ENCODE measurements at regions of chr6 and their contacts with region 1.

Region 1: GRCh38 chr6:43629505-43630300 is 639 bp upstream of the GTPBP2 start:
- DNase-seq: peak; percentile 65 to 96 (median 82)
- ATAC-seq: peak; percentile 58
- H3K4me3 ChIP-seq: peak overlapping the region; percentile 92
- H3K4me3 Mint-ChIP-seq: peak overlapping the region; percentile 98
- H3K27ac ChIP-seq: peak overlapping the region; percentile 86 to 90
- H3K27ac Mint-ChIP-seq: peak overlapping the region; percentile 94
- H3K4me1 ChIP-seq: peaks cover 40% of the 10 kb centered on the region
- H3K4me1 Mint-ChIP-seq: peaks cover 41% of the 10 kb centered on the region
- H3K27me3 ChIP-seq: no peaks in the 10 kb centered on the region
- H3K27me3 Mint-ChIP-seq: no peaks in the 10 kb centered on the region
- CTCF ChIP-seq: no peak

Region 2: GRCh38 chr6:43247113-43247999 is 382.3 kb before region 1 on chr6:
- CTCF ChIA-PET with region 1: no interaction called
- POLR2A ChIA-PET with region 1: no interaction called
- intact Hi-C with region 1: loop called in 1 of 2 experiments (anchors 5 kb)
- DNase-seq: peak; percentile 65 to 89 (median 76)
- ATAC-seq: peak; percentile 97
- H3K4me3 ChIP-seq: peak overlapping the region; percentile 58
- H3K4me3 Mint-ChIP-seq: no peak overlapping the region
- H3K27ac ChIP-seq: peak overlapping the region; percentile 24 to 42
- H3K27ac Mint-ChIP-seq: peak overlapping the region; percentile 70
- H3K4me1 ChIP-seq: peaks cover 26% of the 10 kb centered on the region
- H3K4me1 Mint-ChIP-seq: peaks cover 22% of the 10 kb centered on the region
- H3K27me3 ChIP-seq: peaks cover 34 to 35% of the 10 kb centered on the region in 2 experiments
- H3K27me3 Mint-ChIP-seq: peaks cover 15% of the 10 kb centered on the region
- CTCF ChIP-seq: no peak

Region 3: GRCh38 chr6:43427406-43428111 is 202.1 kb before region 1 on chr6 and contains the start of gene ABCC10:
- CTCF ChIA-PET with region 1: no interaction called
- POLR2A ChIA-PET with region 1: interaction called, 10 read pairs
- intact Hi-C with region 1: loop called in 1 of 2 experiments (anchors 5 kb)
- DNase-seq: peak; percentile 89 to 98 (median 94)
- ATAC-seq: peak; percentile 90
- H3K4me3 ChIP-seq: peak within 1 kb of the TSS; percentile 80
- H3K4me3 Mint-ChIP-seq: peak within 1 kb of the TSS; percentile 95
- H3K27ac ChIP-seq: peak within 1 kb of the TSS; percentile 73 to 76
- H3K27ac Mint-ChIP-seq: peak within 1 kb of the TSS; percentile 93
- H3K4me1 ChIP-seq: peaks cover 29% of the 10 kb centered on the region
- H3K4me1 Mint-ChIP-seq: peaks cover 26% of the 10 kb centered on the region
- H3K27me3 ChIP-seq: no peaks in the 10 kb centered on the region
- H3K27me3 Mint-ChIP-seq: no peaks in the 10 kb centered on the region
- CTCF ChIP-seq: peak; percentile 46
- total RNA-seq, gene ABCC10: 35.7 to 38.5 TPM

Region 4: DNA sequence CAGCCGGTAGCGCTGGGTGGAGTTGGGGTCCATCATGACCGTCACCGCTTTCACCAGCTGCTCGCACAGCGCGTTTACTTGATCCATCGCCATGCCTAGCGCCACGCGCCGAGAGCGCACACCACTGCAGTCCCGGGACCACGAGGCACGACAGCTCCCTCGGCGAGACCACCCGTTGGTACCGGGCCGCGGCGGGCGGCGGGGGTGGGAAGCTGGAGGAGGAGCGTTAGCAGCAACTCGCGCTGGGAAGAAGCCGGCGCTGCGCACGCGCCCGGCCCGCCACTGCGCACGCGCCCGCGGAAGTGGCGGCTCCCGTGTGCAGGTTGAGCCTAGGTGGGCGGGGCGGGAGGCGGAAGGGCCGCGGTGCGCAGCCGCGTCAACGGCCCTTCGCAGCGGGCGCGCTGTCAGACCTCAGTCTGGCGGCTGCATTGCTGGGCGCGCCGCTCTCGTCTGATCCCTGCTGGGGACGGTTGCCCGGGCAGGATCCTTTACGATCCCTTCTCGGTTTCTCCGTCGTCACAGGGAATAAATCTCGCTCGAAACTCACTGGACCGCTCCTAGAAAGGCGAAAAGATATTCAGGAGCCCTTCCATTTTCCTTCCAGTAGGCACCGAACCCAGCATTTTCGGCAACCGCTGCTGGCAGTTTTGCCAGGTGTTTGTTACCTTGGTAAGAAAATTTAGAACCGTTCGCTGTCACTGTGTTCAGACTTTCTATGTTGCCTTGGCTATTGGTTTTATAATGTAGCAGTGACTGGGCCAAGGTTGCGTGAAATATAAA is 53.7 kb before region 1 on chr6 and contains the starts of genes POLH and XPO5:
- CTCF ChIA-PET with region 1: no interaction called
- POLR2A ChIA-PET with region 1: interaction called, 8 read pairs
- intact Hi-C with region 1: loop called in 1 of 2 experiments (anchors 2 kb)
- DNase-seq: peak; percentile 75 to 97 (median 89)
- ATAC-seq: peak; percentile 95
- H3K4me3 ChIP-seq: peak within 1 kb of the TSS; percentile 100
- H3K4me3 Mint-ChIP-seq: peak within 1 kb of the TSS; percentile 92
- H3K27ac ChIP-seq: peak within 1 kb of the TSS; percentile 58 to 75
- H3K27ac Mint-ChIP-seq: peak within 1 kb of the TSS; percentile 90
- H3K4me1 ChIP-seq: peaks cover 25% of the 10 kb centered on the region
- H3K4me1 Mint-ChIP-seq: peaks cover 31% of the 10 kb centered on the region
- H3K27me3 ChIP-seq: no peaks in the 10 kb centered on the region
- H3K27me3 Mint-ChIP-seq: no peaks in the 10 kb centered on the region
- CTCF ChIP-seq: no peak
- total RNA-seq, gene POLH: 4.2 to 4.4 TPM
- total RNA-seq, gene XPO5: 26.8 to 31.2 TPM

Region 5: DNA sequence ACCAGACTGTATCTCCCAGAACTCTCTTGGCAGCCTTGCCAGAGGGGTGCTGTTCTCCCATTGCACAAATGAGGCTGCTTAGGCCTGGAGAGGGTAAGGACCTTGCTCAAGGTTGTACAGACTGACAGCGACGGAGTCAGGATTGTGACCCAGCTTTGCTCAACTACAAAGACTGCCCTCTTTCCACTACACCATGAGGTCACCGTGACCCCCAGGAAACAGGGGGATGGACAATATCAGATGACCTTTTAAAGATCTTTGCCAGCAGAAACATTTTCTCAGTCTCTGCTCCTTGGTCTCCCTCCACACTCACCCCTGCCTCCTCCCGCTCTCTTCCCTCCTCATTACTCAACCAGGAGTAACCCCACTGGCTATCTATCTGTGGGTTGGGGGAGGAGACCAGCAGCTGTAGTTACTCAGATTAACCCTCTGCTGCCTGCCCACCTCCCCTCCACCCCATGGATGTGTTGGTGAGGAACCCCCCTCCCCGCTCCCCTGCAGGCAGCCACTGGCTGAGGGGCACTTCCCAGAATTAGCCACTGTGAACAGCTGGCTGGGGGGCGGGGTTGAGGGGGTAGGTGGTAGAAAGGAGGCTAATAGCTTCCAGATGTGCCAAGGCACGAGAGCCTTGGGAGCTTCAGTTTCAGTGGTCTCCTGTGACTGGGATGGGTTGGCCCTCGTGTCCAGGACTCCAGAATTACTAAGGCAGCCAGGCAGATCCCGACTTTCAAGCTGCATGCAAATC is 84.8 kb after region 1 on chr6:
- CTCF ChIA-PET with region 1: no interaction called
- POLR2A ChIA-PET with region 1: no interaction called
- intact Hi-C with region 1: no loop called
- DNase-seq: no peak
- ATAC-seq: no peak
- H3K4me3 ChIP-seq: no peak overlapping the region
- H3K4me3 Mint-ChIP-seq: no peak overlapping the region
- H3K27ac ChIP-seq: no peak overlapping the region
- H3K27ac Mint-ChIP-seq: no peak overlapping the region
- H3K4me1 ChIP-seq: no peaks in the 10 kb centered on the region
- H3K4me1 Mint-ChIP-seq: no peaks in the 10 kb centered on the region
- H3K27me3 ChIP-seq: no peaks in the 10 kb centered on the region
- H3K27me3 Mint-ChIP-seq: peaks cover 10% of the 10 kb centered on the region
- CTCF ChIP-seq: no peak

Region 6: DNA sequence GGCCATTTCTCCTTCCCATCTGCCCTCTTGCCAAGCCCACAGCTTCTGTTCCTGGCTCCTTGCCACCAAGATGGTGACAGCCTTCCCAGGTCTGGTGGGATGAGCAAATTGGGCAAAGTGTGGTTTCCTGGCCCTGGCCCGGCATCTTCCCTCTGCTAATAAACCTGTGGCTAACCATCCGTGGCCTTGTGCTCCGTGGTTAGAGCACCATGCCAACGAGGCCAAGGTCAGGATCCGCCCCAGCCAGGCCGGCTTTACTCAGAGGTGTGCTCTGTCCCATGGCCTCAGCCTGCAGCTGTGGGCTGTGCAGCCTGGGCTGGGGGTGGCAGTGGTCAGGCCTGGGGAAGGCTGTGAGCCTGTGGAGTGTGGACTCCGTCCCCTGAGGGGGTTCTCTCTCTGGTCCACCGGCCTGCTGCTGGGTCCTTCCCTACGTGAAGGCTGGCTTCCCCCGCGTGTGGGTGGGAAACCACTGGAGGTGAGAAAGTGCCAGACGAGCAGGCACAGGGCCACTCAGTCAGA is 257.7 kb after region 1 on chr6:
- CTCF ChIA-PET with region 1: no interaction called
- POLR2A ChIA-PET with region 1: no interaction called
- intact Hi-C with region 1: no loop called
- DNase-seq: no peak
- ATAC-seq: no peak
- H3K4me3 ChIP-seq: no peak overlapping the region
- H3K4me3 Mint-ChIP-seq: no peak overlapping the region
- H3K27ac ChIP-seq: no peak overlapping the region
- H3K27ac Mint-ChIP-seq: no peak overlapping the region
- H3K4me1 ChIP-seq: peaks cover 4% of the 10 kb centered on the region
- H3K4me1 Mint-ChIP-seq: peaks cover 7% of the 10 kb centered on the region
- H3K27me3 ChIP-seq: peaks cover 4 to 10% of the 10 kb centered on the region in 2 experiments
- H3K27me3 Mint-ChIP-seq: peaks cover 28% of the 10 kb centered on the region
- CTCF ChIP-seq: no peak

Region 7: GRCh38 chr6:44221291-44221960 is 591.7 kb after region 1 on chr6:
- CTCF ChIA-PET with region 1: no interaction called
- POLR2A ChIA-PET with region 1: no interaction called
- intact Hi-C with region 1: loop called in 1 of 2 experiments (anchors 10 kb)
- DNase-seq: peak; percentile 60 to 88 (median 72)
- ATAC-seq: peak; percentile 67
- H3K4me3 ChIP-seq: no peak overlapping the region
- H3K4me3 Mint-ChIP-seq: peak overlapping the region; percentile 77
- H3K27ac ChIP-seq: no peak overlapping the region
- H3K27ac Mint-ChIP-seq: peak overlapping the region; percentile 39
- H3K4me1 ChIP-seq: peaks cover 38% of the 10 kb centered on the region
- H3K4me1 Mint-ChIP-seq: peaks cover 36% of the 10 kb centered on the region
- H3K27me3 ChIP-seq: peaks cover 4 to 7% of the 10 kb centered on the region in 2 experiments
- H3K27me3 Mint-ChIP-seq: no peaks in the 10 kb centered on the region
- CTCF ChIP-seq: peak; percentile 66

Measured in CD4-positive, alpha-beta T cell (primary cell).